ENCODE measurements at regions of chr11 and their contacts with region 1.

Region 1: DNA sequence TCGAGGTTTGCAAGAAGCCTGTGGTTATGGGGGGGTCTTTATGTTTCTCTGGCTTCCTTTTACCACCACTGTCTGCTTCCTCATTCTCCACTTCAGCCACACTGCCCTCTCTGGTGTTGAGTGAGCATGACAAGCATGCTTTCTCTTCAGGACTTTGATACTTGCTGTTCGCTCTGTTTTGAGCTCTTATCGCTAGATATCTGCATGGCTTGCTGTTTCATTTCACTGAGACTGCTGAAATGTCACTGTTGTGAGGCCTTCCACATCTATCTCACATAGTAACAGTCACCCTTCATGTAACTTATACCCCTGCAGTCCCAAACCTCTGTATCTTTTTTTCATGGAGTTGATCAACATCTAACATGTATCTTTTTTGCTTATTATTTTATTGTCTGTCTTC is 59.8 kb downstream of the TMEM135 start:
- DNase-seq: no peak
- ATAC-seq: peak; percentile 86
- H3K4me3 Mint-ChIP-seq: no peak overlapping the region
- H3K27ac Mint-ChIP-seq: no peak overlapping the region
- H3K4me1 Mint-ChIP-seq: peaks cover 6% of the 10 kb centered on the region
- H3K27me3 Mint-ChIP-seq: no peaks in the 10 kb centered on the region
- CTCF ChIP-seq: no peak

Region 2: GRCh38 chr11:86978756-86979608 is 118.6 kb before region 1 on chr11:
- CTCF ChIA-PET with region 1: no interaction called
- POLR2A ChIA-PET with region 1: no interaction called
- intact Hi-C with region 1: loop called (anchors 2 kb)
- DNase-seq: no peak
- ATAC-seq: no peak
- H3K4me3 Mint-ChIP-seq: no peak overlapping the region
- H3K27ac Mint-ChIP-seq: no peak overlapping the region
- H3K4me1 Mint-ChIP-seq: no peaks in the 10 kb centered on the region
- H3K27me3 Mint-ChIP-seq: peaks cover 5% of the 10 kb centered on the region
- CTCF ChIP-seq: no peak

Region 3: GRCh38 chr11:86996953-86997570 is 100.5 kb before region 1 on chr11:
- CTCF ChIA-PET with region 1: interaction called, 6 read pairs
- POLR2A ChIA-PET with region 1: no interaction called
- intact Hi-C with region 1: loop called (anchors 2 kb)
- DNase-seq: no peak
- ATAC-seq: no peak
- H3K4me3 Mint-ChIP-seq: no peak overlapping the region
- H3K27ac Mint-ChIP-seq: no peak overlapping the region
- H3K4me1 Mint-ChIP-seq: no peaks in the 10 kb centered on the region
- H3K27me3 Mint-ChIP-seq: peaks cover 3% of the 10 kb centered on the region
- CTCF ChIP-seq: no peak

Measured in activated B cell treated with CpG ODN at 0.5 μM for 24 hours (primary cell).